ENCODE measurements at regions of chr5 and their contacts with region 1.

Region 1: GRCh38 chr5:69492391-69492922 is at the start of gene OCLN:
- DNase-seq: peak; percentile 81
- ATAC-seq: peak; percentile 90
- H3K4me3 ChIP-seq: peak within 1 kb of the TSS; percentile 84 to 86
- H3K27ac ChIP-seq: peak within 1 kb of the TSS; percentile 90
- H3K4me1 ChIP-seq: peaks cover 11 to 39% of the 10 kb centered on the region in 2 experiments
- H3K27me3 ChIP-seq: no peaks in the 10 kb centered on the region
- CTCF ChIP-seq: no peak
- POLR2A ChIP-seq: no peak
- RAD21 ChIP-seq: no peak; the same call in 1 of the 2 replicates
- total RNA-seq, gene OCLN: 56.7 TPM

Region 2: DNA sequence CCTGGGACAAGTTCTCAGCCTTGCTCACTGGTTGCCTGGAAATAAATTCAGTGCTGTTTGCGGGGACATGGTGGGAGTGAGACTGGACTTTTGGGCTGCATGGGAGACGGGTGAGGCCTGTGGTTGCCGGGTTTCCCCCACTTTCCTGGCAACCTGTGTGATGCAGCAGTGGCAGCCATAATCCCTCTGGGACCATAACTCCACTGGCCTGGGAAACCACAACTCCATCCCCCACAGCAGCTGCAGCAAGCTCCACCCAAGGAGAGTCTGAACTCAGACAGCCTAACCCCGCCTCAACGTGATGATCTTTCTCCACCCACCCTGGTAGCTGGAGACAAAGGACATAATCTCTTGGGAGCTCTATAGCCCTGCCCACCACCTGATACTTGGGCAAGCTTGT is 927.0 kb before region 1 on chr5:
- CTCF ChIA-PET with region 1: no interaction called
- POLR2A ChIA-PET with region 1: no interaction called
- RAD21 ChIA-PET with region 1: no interaction called
- intact Hi-C with region 1: no loop called
- DNase-seq: no peak
- ATAC-seq: no peak
- H3K4me3 ChIP-seq: no peak overlapping the region
- H3K27ac ChIP-seq: no peak overlapping the region
- H3K4me1 ChIP-seq: no peaks in the 10 kb centered on the region; a peak in 1 of 4 replicates
- H3K27me3 ChIP-seq: no peaks in the 10 kb centered on the region
- CTCF ChIP-seq: no peak
- POLR2A ChIP-seq: no peak
- RAD21 ChIP-seq: no peak

Region 3: GRCh38 chr5:69170507-69170906 is 321.9 kb before region 1 on chr5:
- CTCF ChIA-PET with region 1: no interaction called
- POLR2A ChIA-PET with region 1: no interaction called
- RAD21 ChIA-PET with region 1: no interaction called
- intact Hi-C with region 1: no loop called
- DNase-seq: no peak
- ATAC-seq: no peak
- H3K4me3 ChIP-seq: no peak overlapping the region
- H3K27ac ChIP-seq: no peak overlapping the region
- H3K4me1 ChIP-seq: peaks cover 14 to 20% of the 10 kb centered on the region in 2 experiments
- H3K27me3 ChIP-seq: no peaks in the 10 kb centered on the region
- CTCF ChIP-seq: no peak
- POLR2A ChIP-seq: no peak
- RAD21 ChIP-seq: no peak

Region 4: DNA sequence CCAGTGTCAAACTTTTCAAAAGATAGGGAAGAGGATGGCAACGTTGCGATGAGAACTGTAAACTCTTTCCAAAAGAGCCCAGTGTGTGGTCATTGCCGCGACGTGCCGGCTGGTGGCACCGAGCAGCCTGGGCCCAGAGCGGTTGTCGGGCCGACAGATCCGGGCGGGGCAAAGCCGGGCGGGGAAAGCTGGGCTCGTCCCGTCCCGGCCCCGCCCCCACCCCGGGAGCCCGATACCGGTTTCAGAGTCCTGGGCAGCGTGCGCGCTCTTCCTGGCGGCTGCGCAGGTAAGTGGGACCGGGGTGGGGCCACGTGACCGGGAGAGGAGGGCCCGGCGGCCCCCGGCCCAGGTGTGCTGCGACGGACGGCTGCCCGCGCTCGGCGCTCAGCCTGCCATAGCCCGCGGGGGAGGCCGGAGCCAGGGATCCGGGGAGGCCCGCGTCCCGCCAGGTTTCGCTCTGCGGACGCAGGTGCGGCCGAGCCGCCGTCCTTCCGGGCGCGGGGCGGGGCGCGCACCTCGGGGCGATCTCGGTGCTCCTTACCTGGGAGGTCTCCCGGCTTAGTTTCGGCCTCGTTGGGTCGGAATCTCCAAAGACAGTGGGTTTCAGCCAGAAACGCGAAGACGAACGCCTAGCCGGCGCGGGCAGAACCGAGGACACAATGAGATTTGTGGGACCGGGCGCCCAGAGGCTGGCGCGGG is 77.4 kb before region 1 on chr5 and contains the start of gene MARVELD2:
- CTCF ChIA-PET with region 1: no interaction called
- POLR2A ChIA-PET with region 1: no interaction called
- RAD21 ChIA-PET with region 1: no interaction called
- intact Hi-C with region 1: loop called (anchors 2 kb)
- DNase-seq: peak; percentile 77
- ATAC-seq: peak; percentile 96
- H3K4me3 ChIP-seq: peak within 1 kb of the TSS; percentile 78 to 94
- H3K27ac ChIP-seq: peak within 1 kb of the TSS; percentile 92
- H3K4me1 ChIP-seq: peaks cover 5 to 17% of the 10 kb centered on the region in 2 experiments; a peak in 3 of 4 replicates
- H3K27me3 ChIP-seq: no peaks in the 10 kb centered on the region
- CTCF ChIP-seq: peak; percentile 28 to 50 (median 36); a peak in 5 of 6 replicates
- POLR2A ChIP-seq: peak; percentile 60
- RAD21 ChIP-seq: peak; percentile 82
- total RNA-seq, gene MARVELD2: 21.6 TPM

Region 5: GRCh38 chr5:69467442-69468225 is 24.8 kb before region 1 on chr5:
- CTCF ChIA-PET with region 1: no interaction called
- POLR2A ChIA-PET with region 1: no interaction called
- RAD21 ChIA-PET with region 1: no interaction called
- intact Hi-C with region 1: loop called (anchors 1 kb)
- DNase-seq: no peak
- ATAC-seq: no peak
- H3K4me3 ChIP-seq: no peak overlapping the region
- H3K27ac ChIP-seq: no peak overlapping the region
- H3K4me1 ChIP-seq: no peaks in the 10 kb centered on the region
- H3K27me3 ChIP-seq: no peaks in the 10 kb centered on the region
- CTCF ChIP-seq: no peak
- POLR2A ChIP-seq: no peak
- RAD21 ChIP-seq: no peak

Measured in HCT116 (cell line).